ENCODE measurements at regions of chr1 and their contacts with region 1.

Region 1: DNA sequence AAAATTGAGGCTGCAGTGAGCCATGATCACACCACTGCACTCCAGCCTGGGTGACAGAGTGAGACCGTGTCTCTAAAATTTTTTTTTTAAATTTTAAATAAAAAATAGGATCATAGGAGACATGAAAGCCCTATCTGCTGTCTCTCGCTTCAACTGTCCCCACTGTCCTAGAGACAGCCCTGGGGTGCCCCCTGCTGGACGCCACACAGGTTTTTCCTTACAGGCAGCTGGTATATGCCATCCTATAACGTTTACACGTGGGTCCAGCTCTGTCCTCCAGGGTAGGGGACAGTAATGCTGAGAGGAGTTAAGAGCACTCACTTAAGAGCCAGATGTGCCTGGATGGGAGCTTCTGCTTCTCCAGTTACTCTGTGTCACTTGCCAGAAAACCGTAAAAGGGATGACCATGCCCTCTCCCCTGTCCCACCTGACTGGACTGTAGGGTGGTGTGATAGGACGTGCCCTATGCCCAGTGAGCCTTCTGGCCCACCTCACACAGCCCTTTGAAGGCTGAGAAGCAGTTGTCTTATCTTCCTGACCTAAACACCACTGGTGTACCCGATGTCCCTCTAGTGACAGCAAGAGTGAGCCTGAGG is 8.5 kb downstream of the FBXO2 start:
- DNase-seq: peak; percentile 85
- H3K4me3 Mint-ChIP-seq: no peak overlapping the region
- H3K27ac Mint-ChIP-seq: no peak overlapping the region
- H3K4me1 Mint-ChIP-seq: peaks cover 17% of the 10 kb centered on the region
- H3K27me3 Mint-ChIP-seq: peaks cover 7% of the 10 kb centered on the region

Region 2: DNA sequence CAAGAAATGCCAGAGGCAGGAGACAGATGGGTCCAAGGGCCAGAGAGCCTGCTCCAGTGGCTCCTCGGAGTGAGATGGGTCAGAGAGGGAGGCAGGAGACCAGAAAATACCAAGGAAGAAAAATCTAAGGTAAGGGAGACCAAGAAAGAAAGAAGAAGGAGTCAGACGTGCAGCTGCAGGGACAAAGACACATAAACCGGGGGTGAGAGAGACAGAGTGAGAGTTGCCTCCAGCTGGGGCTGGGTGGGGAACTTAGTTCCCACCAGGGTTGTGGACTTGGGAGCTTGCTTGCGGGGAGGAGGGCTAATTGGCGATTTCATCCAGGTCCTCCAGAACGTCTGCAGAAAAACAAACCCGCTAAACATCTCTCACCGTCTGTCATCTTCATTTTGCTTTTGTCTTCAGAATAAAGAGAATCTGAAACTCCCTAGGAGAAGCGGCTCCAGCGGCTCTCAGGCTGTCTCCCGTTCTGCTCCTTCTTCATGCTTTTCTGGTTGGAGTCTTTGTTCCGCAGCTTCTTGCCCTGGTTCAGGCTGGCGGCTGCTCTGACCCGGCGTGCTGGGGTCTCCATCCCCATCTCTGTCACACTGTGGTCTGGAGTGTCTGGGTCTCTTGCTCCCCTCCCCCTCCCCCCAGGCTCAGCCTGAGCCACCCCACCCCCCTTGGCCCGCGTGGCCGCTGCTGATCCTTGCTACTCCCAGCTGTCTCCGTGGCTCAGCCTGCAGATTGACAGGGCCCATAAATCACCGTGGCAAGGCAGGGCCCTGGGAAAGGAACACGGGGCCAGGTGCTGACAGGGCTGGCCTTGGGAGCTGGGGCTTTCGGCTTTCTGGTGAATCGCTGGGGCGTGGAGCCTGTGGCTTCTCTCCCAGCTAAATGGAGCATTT is 306.2 kb before region 1 on chr1:
- CTCF ChIA-PET with region 1: interaction called, 10 read pairs
- POLR2A ChIA-PET with region 1: no interaction called
- DNase-seq: no peak
- H3K4me3 Mint-ChIP-seq: no peak overlapping the region
- H3K27ac Mint-ChIP-seq: no peak overlapping the region
- H3K4me1 Mint-ChIP-seq: no peaks in the 10 kb centered on the region
- H3K27me3 Mint-ChIP-seq: peaks cover 26% of the 10 kb centered on the region

Region 3: DNA sequence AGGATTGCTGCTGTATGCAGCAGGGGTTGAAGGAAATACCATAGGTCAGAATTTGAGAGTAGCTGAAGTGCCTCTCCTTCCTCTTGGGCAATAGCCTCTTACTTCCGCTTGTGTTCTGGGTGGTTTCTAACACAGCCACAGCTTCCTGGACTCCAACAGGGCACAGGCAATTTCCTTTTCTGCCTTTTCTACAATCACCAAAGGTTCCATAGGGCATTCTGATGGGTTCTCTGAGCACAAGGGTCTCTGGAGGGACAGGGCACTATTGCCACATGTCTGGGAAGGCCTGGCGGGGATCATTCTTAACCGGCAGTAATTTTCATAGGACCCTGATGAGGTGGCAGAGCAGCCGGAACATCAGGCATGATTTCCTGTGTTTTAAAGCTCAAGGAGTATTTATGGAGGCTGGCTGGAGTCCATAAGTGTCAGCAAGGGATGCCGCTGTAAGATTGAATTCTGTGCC is 84.7 kb after region 1 on chr1:
- CTCF ChIA-PET with region 1: interaction called, 19 read pairs
- POLR2A ChIA-PET with region 1: interaction called, 8 read pairs
- DNase-seq: peak; percentile 71
- H3K4me3 Mint-ChIP-seq: peak overlapping the region; percentile 66
- H3K27ac Mint-ChIP-seq: peak overlapping the region; percentile 88
- H3K4me1 Mint-ChIP-seq: peaks cover 50% of the 10 kb centered on the region
- H3K27me3 Mint-ChIP-seq: no peaks in the 10 kb centered on the region

Region 4: DNA sequence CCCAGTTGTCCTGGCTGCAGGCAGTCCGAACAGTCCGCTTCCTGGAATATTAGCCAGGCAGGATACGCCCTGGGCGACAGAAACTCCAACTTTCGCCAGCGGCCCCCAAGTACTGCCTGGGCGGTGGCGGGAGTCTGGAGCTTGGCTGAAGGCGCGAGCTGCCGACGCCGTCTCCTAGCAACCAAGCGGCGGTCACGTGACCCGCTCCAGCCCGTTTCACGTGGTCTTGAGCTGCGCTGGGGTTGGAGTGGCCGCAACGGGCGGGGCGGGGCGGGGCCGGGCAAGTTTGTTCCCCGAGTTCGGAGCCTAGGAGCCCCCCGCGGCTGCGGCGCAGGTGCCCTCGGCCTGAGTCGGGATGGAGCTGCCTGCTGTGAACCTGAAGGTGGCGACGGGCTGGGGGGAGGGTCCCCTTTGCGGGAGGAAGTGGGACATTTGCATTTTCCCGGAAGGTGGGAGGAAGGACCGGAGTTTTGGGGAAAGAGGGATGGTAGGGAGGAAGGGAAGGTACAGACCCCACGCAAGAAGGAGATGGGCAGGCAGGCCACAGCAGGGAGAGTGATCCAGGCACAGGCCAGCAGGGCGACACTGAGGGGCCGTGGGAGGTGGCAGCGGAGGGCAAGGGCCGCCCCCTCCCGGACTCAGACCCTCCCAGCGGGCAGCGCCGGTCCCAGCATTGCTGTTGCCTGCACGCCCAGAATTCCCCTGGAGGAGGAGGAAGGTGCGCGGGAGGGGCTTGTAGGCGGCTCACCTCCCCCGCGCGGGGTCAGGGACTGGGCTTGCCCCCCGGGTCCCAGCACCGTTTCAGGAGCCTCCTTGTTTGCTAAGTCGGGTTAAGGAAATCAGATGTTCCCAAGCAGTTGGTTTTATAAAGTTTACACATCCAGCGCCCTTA is 90.3 kb after region 1 on chr1 and contains the start of gene AGTRAP:
- CTCF ChIA-PET with region 1: interaction called, 19 read pairs
- POLR2A ChIA-PET with region 1: interaction called, 8 read pairs
- DNase-seq: peak; percentile 92
- H3K4me3 Mint-ChIP-seq: peak within 1 kb of the TSS; percentile 98
- H3K27ac Mint-ChIP-seq: peak within 1 kb of the TSS; percentile 86
- H3K4me1 Mint-ChIP-seq: peaks cover 69% of the 10 kb centered on the region
- H3K27me3 Mint-ChIP-seq: no peaks in the 10 kb centered on the region
- total RNA-seq, gene AGTRAP: 52.7 to 57.3 TPM

Region 5: GRCh38 chr1:11749203-11749689 is 103.5 kb after region 1 on chr1:
- CTCF ChIA-PET with region 1: interaction called, 15 read pairs
- POLR2A ChIA-PET with region 1: no interaction called
- DNase-seq: peak; percentile 78
- H3K4me3 Mint-ChIP-seq: no peak overlapping the region
- H3K27ac Mint-ChIP-seq: peak overlapping the region; percentile 74
- H3K4me1 Mint-ChIP-seq: peaks cover 42% of the 10 kb centered on the region
- H3K27me3 Mint-ChIP-seq: no peaks in the 10 kb centered on the region

Measured in activated CD4-positive, alpha-beta memory T cell treated with anti-CD3 and anti-CD28 coated beads, Interleukin-2, amount 10 ng/mL, durations not matched to agents 7 days and 5 days (primary cell).